H1 (cell line): ENCODE measurements at regions of chr3 and their contacts with region 1.

Region 1: DNA sequence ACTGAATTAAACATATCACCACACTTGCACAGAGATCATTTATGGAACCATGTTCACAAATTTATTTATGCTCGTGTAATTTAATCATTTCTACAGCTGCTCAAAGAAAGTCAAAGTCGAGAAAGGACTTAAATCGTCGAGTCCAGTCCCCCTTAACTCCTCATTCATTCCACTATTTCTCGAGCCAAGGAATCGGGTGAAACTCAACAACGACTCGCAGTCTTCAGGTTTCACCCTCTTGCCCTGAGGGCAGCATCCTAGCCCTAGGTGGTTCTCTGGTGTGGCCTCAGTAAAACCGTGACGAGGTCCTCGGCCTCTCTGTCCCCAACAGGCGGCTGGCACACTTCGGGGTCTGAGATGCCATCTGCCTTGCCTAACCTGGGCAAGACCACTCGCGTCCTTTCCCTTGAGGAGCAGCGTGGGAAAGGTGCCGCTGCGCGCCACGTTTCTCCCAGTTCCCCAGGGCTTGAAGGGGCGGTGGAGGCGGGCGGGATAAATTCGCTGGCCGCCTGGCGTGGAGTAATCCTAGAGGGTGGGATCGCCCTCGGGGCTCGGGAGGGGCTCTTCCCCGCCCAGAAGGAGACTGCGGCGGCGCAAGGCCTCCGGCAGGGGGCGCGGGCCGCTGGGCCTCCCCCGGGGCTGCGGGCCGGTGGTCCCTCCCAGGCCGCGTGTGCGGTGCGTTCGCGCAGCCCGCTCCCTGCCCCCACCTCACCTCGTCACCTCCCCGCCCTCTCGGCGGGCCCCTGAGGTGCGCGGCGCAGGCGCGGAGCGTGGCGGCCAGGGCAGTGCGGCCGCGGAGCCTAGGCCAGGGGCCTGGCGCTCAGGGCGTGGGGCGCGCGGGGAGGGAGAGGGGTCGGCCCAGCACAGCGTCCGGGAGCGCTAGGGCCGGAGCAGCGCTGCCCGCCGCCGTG is at the start of gene ZNF639:
- DNase-seq: peak; percentile 77 to 90
- H3K4me3 ChIP-seq: peak within 1 kb of the TSS; percentile 65 to 90 (median 72)
- H3K27ac ChIP-seq: peak within 1 kb of the TSS; percentile 81
- H3K4me1 ChIP-seq: peaks cover 0 to 6% (median 3%) of the 10 kb centered on the region in 4 experiments; a peak in 4 of 7 replicates
- H3K27me3 ChIP-seq: no peaks in the 10 kb centered on the region
- CTCF ChIP-seq: peak; percentile 71 to 90 (median 76)
- EP300 ChIP-seq: peak in 1 of 2 experiments; percentile 96; a peak in 2 of 3 replicates
- POLR2A ChIP-seq: peak; percentile 68 to 79
- RAD21 ChIP-seq: peak; percentile 14 to 38; a peak in 3 of 4 replicates
- total RNA-seq, gene ZNF639: 41.4 and 43.0 TPM in 2 replicates

Region 2: DNA sequence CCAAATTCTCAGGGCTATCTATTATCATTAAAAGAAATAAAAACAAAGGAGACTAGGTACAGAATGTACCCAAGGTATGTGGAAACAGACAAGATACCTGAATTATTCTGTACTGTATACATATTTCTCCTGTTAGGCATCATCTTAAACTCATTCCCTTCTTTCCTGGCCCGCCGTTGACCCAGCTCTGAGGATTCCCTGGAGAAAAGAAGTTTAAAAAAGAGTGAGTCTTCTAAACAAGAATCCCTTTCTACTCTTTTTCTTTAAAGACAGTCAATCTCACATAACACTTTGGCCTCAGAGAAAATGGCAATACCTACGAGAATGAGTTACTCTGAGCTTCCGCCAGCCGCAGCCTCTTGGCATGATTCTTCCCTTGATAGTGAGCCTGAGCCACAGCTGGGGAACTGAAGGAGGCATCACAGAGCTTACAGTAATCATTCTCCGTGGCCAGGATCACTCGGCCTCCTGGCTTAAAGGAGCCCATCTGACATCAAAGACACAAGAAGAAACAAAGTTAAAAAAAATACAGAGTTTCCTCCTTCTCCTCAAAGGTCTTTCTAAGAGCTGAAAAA is 295.1 kb before region 1 on chr3:
- CTCF ChIA-PET with region 1: interaction called, 12 read pairs
- POLR2A ChIA-PET with region 1: no interaction called
- DNase-seq: no peak
- H3K4me3 ChIP-seq: no peak overlapping the region
- H3K27ac ChIP-seq: no peak overlapping the region
- H3K4me1 ChIP-seq: no peaks in the 10 kb centered on the region
- H3K27me3 ChIP-seq: no peaks in the 10 kb centered on the region
- CTCF ChIP-seq: 0 out of 4 replicates have a peak, but pooled peaks of 1 of the 3 experiments have one; percentile 2
- EP300 ChIP-seq: no peak
- POLR2A ChIP-seq: no peak
- RAD21 ChIP-seq: peak in 1 of 2 experiments; percentile 12; a peak in 1 of 4 replicates

Region 3: DNA sequence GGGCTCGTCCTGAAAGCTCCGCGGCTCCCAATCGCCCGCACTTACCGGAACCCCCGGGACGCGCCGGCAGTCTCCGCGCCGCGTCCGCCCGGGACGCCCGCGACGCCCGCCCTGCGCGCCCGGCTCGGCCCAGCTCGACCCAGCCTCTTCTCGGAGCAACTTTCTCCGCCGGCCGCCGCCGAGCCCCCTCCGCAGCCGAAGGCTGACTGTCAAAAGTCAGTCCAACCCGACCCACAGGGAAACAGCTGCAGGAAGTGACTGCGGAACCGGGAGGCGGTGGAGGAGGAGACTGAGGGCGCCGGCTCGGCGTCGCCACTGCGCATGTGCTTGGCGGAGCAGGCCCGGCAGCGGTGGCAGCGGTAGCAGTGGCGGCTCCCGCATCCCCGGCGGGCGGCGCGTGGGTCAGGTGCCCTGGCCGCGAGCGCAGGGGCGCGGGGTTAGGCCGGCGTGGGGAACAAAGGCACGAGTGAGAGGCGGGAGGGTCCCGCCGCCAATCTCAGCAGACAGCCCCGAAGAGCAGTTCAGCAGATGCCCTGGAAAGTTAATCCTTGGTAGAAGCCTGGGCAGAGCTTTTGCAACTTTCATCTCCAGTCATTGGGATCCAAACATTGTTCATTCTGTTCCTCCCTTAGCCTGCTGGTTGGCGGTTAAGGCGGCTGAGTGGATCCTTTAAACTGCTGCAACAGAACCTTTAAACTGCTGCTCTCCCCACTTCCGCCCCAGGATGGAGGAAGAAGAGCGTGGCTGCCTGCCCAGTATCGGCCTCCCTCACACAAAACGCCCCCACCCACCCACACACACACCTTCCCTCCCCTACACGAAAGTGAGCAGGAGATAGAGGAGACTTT is 250.8 kb before region 1 on chr3 and contains the start of gene ZMAT3:
- CTCF ChIA-PET with region 1: interaction called, 81 read pairs
- POLR2A ChIA-PET with region 1: no interaction called
- DNase-seq: peak; percentile 53 to 89
- H3K4me3 ChIP-seq: peak within 1 kb of the TSS; percentile 69 to 86 (median 80)
- H3K27ac ChIP-seq: 0 out of 2 replicates have a peak within 1 kb of the TSS, but pooled peaks have one; percentile 43
- H3K4me1 ChIP-seq: peaks cover 0 to 7% (median 4%) of the 10 kb centered on the region in 4 experiments; a peak in 3 of 7 replicates
- H3K27me3 ChIP-seq: peaks cover 0 to 2% (median 0%) of the 10 kb centered on the region in 4 experiments; a peak in 2 of 7 replicates
- CTCF ChIP-seq: no peak
- EP300 ChIP-seq: no peak
- POLR2A ChIP-seq: peak in 1 of 2 experiments; percentile 64; a peak in 1 of 3 replicates
- RAD21 ChIP-seq: no peak; a peak in 1 of 4 replicates
- total RNA-seq, gene ZMAT3: 9.2 and 10.4 TPM in 2 replicates

Region 4: GRCh38 chr3:179147873-179148615 is 174.5 kb before region 1 on chr3 and contains the start of gene PIK3CA:
- CTCF ChIA-PET with region 1: interaction called, 30 read pairs
- POLR2A ChIA-PET with region 1: no interaction called
- DNase-seq: peak; percentile 78 to 87
- H3K4me3 ChIP-seq: peak within 1 kb of the TSS; percentile 89 to 94 (median 92)
- H3K27ac ChIP-seq: peak within 1 kb of the TSS; percentile 74; the same call in 1 of the 2 replicates
- H3K4me1 ChIP-seq: no peaks in the 10 kb centered on the region
- H3K27me3 ChIP-seq: no peaks in the 10 kb centered on the region
- CTCF ChIP-seq: no peak
- EP300 ChIP-seq: no peak
- POLR2A ChIP-seq: peak in 1 of 2 experiments; percentile 64; a peak in 2 of 3 replicates
- RAD21 ChIP-seq: no peak
- total RNA-seq, gene PIK3CA: 11.3 and 14.1 TPM in 2 replicates